ENCODE measurements at regions of chr9 and their contacts with region 1.

Region 1: GRCh38 chr9:133320421-133320881 is 15.5 kb downstream of the SURF6 start:
- DNase-seq: no peak
- H3K4me3 ChIP-seq: no peak overlapping the region
- H3K27ac ChIP-seq: no peak overlapping the region
- H3K4me1 ChIP-seq: no peaks in the 10 kb centered on the region
- H3K27me3 ChIP-seq: no peaks in the 10 kb centered on the region
- CTCF ChIP-seq: no peak
- POLR2A ChIP-seq: no peak

Region 2: GRCh38 chr9:132944302-132945185 is 375.9 kb before region 1 on chr9 and contains the start of gene TSC1:
- intact Hi-C with region 1: no loop called
- DNase-seq: peak; percentile 90
- H3K4me3 ChIP-seq: peak within 1 kb of the TSS; percentile 88 to 99 (median 96)
- H3K27ac ChIP-seq: peak within 1 kb of the TSS; percentile 91 to 98 (median 97)
- H3K4me1 ChIP-seq: peaks cover 9 to 42% (median 22%) of the 10 kb centered on the region in 3 donors
- H3K27me3 ChIP-seq: no peaks in the 10 kb centered on the region
- CTCF ChIP-seq: peak in 2 of 6 experiments; percentile 4 to 24
- POLR2A ChIP-seq: peak in 2 of 4 donors; percentile 39 to 74
- total RNA-seq, gene TSC1: 18.8 to 38.7 (median 25.7) TPM

Region 3: DNA sequence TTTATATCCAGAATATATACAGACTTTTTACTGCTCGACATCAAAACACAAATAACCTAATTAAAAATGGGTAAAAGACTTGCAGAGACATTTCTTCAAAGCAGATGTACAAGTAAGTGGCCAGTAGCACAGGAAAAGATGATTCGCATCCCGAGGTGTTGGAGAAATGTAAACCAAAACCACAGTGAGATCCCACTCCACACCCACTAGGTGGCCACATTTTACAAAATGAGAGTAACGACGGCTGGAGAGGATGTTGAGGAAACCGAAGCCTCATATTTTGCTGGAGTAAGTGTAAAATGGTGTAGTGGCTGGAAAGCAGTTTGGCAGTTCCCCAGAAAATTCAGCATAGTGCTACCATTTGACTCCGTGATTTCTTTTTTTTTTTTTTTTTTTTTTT is 135.5 kb before region 1 on chr9:
- intact Hi-C with region 1: loop called (anchors 5 kb)
- DNase-seq: no peak
- H3K4me3 ChIP-seq: no peak overlapping the region
- H3K27ac ChIP-seq: no peak overlapping the region
- H3K4me1 ChIP-seq: peaks cover 0 to 15% (median 5%) of the 10 kb centered on the region in 3 donors
- H3K27me3 ChIP-seq: peaks cover 0 to 45% (median 0%) of the 10 kb centered on the region in 4 donors
- CTCF ChIP-seq: peak; percentile 46 to 78 (median 68)
- POLR2A ChIP-seq: no peak